ENCODE measurements at regions of chr4 and their contacts with region 1.

Region 1: DNA sequence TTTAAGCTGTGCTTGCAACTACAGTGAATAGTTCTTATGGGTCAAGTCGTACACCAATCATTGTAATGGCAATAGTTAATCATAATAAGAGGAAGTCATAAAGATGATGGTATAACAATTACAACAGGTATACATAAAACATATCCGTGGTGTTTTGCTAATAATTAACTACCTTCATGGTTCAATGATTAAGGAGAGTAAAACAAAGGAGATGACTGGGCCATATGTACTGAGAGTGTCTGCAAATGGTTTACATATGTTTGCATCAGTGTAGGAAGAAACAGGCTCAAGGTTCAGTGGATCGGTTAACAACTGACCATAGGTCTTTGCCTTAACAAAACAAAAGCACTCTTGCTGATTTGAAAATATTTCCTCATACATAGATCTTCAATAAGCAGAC is 253.0 kb downstream of the COX7B2 start:
- DNase-seq: no peak
- ATAC-seq: no peak
- H3K4me3 ChIP-seq: no peak overlapping the region
- H3K27ac ChIP-seq: no peak overlapping the region
- H3K4me1 ChIP-seq: no peaks in the 10 kb centered on the region
- H3K27me3 ChIP-seq: no peaks in the 10 kb centered on the region
- CTCF ChIP-seq: no peak
- POLR2A ChIP-seq: no peak
- RAD21 ChIP-seq: no peak

Region 2: GRCh38 chr4:44771789-44772188 is 1884.3 kb before region 1 on chr4:
- CTCF ChIA-PET with region 1: no interaction called
- POLR2A ChIA-PET with region 1: no interaction called
- dilution Hi-C with region 1: no loop called
- in situ Hi-C with region 1: no loop called
- intact Hi-C with region 1: loop called (anchors 5 kb)
- DNase-seq: no peak
- ATAC-seq: no peak
- H3K4me3 ChIP-seq: no peak overlapping the region
- H3K27ac ChIP-seq: no peak overlapping the region
- H3K4me1 ChIP-seq: no peaks in the 10 kb centered on the region
- H3K27me3 ChIP-seq: no peaks in the 10 kb centered on the region
- CTCF ChIP-seq: no peak
- POLR2A ChIP-seq: no peak
- RAD21 ChIP-seq: no peak

Region 3: GRCh38 chr4:46073778-46074177 is 582.3 kb before region 1 on chr4:
- CTCF ChIA-PET with region 1: no interaction called
- POLR2A ChIA-PET with region 1: no interaction called
- dilution Hi-C with region 1: no loop called
- in situ Hi-C with region 1: no loop called
- intact Hi-C with region 1: no loop called
- DNase-seq: no peak
- ATAC-seq: no peak
- H3K4me3 ChIP-seq: no peak overlapping the region
- H3K27ac ChIP-seq: no peak overlapping the region
- H3K4me1 ChIP-seq: no peaks in the 10 kb centered on the region
- H3K27me3 ChIP-seq: no peaks in the 10 kb centered on the region
- CTCF ChIP-seq: no peak
- POLR2A ChIP-seq: no peak
- RAD21 ChIP-seq: no peak